CD4-positive, alpha-beta T cell (primary cell): ENCODE measurements at regions of chr10 and their contacts with region 1.

Region 1: DNA sequence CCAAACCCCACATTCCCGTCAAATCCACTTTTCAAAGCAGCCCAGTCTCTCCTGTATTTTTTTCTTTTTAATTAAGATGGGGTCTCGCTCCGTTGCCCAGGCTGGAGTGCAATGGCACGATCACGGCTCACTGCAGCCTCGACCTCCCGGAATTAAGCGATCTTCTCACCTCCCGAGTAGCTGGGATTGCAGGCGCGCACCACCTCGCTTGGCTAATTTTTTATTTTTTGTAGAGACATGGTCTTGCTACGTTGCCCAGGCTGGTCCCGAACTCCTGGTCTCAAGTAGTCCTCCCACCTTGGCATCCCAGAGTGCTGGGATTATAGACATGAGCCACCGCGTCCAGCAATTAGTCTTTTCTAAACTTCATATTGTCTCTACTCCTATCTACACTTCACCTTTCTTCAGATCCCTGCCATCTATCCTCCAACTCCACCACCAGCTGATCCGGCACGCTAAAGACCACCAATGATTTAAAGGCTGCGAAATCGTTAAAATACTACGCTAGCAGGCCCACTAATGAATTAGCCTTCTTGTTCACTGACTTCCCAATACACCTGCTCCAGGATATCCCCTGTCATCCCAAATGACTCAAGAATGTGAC is 525 bp upstream of the CHUK start:
- DNase-seq: peak in 2 of 14 experiments; percentile 5 to 8
- ATAC-seq: no peak
- H3K4me3 ChIP-seq: peak overlapping the region; percentile 95
- H3K4me3 Mint-ChIP-seq: peak overlapping the region; percentile 88
- H3K27ac ChIP-seq: peak overlapping the region; percentile 62 to 72
- H3K27ac Mint-ChIP-seq: peak overlapping the region; percentile 60
- H3K4me1 ChIP-seq: peaks cover 16% of the 10 kb centered on the region
- H3K4me1 Mint-ChIP-seq: peaks cover 35% of the 10 kb centered on the region
- H3K27me3 ChIP-seq: no peaks in the 10 kb centered on the region
- H3K27me3 Mint-ChIP-seq: no peaks in the 10 kb centered on the region
- CTCF ChIP-seq: no peak

Region 2: DNA sequence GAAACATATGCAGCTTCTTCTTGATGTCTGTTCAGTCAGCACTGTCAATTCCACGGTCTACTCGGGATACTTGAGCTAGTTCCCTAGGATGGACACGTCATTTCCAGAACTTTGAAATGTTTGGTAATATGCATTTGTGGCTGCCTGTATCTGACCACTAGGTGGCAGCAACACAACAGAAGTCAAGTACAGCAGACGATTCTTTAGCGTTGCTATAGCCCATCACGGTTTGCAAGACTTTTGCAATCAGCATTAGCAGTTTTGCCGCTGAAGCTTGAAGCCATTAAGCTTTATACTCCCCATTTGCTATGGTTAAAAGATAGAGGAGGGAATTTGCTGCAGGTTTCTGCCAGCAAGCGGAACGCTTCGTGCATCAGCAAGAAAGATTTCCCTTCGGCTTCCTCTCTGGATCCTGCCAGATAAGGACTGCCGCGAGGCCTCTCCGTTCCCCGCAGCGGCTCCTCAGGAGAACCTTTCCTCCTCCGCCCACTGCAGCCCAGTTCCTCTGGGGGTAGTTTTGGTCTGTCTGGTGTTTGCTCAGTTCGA is 384.0 kb before region 1 on chr10:
- CTCF ChIA-PET with region 1: no interaction called
- POLR2A ChIA-PET with region 1: no interaction called
- intact Hi-C with region 1: loop called (anchors 5 to 10 kb)
- DNase-seq: peak; percentile 41 to 88 (median 58)
- ATAC-seq: peak; percentile 81
- H3K4me3 ChIP-seq: peak overlapping the region; percentile 13
- H3K4me3 Mint-ChIP-seq: no peak overlapping the region
- H3K27ac ChIP-seq: no peak overlapping the region
- H3K27ac Mint-ChIP-seq: no peak overlapping the region
- H3K4me1 ChIP-seq: peaks cover 6% of the 10 kb centered on the region
- H3K4me1 Mint-ChIP-seq: peaks cover 5% of the 10 kb centered on the region
- H3K27me3 ChIP-seq: peaks cover 0 to 8% of the 10 kb centered on the region in 2 experiments
- H3K27me3 Mint-ChIP-seq: no peaks in the 10 kb centered on the region
- CTCF ChIP-seq: peak; percentile 92

Region 3: GRCh38 chr10:100185364-100186252 is 44.3 kb before region 1 on chr10 and contains the start of gene ERLIN1:
- CTCF ChIA-PET with region 1: interaction called, 3 read pairs
- POLR2A ChIA-PET with region 1: no interaction called
- intact Hi-C with region 1: loop called (anchors 2 kb)
- DNase-seq: peak; percentile 82 to 96 (median 90)
- ATAC-seq: peak; percentile 92
- H3K4me3 ChIP-seq: peak within 1 kb of the TSS; percentile 80
- H3K4me3 Mint-ChIP-seq: peak within 1 kb of the TSS; percentile 98
- H3K27ac ChIP-seq: peak within 1 kb of the TSS; percentile 72 to 81
- H3K27ac Mint-ChIP-seq: peak within 1 kb of the TSS; percentile 92
- H3K4me1 ChIP-seq: peaks cover 22% of the 10 kb centered on the region
- H3K4me1 Mint-ChIP-seq: peaks cover 73% of the 10 kb centered on the region
- H3K27me3 ChIP-seq: no peaks in the 10 kb centered on the region
- H3K27me3 Mint-ChIP-seq: no peaks in the 10 kb centered on the region
- CTCF ChIP-seq: no peak
- total RNA-seq, gene ERLIN1: 1.5 to 2.9 TPM

Region 4: DNA sequence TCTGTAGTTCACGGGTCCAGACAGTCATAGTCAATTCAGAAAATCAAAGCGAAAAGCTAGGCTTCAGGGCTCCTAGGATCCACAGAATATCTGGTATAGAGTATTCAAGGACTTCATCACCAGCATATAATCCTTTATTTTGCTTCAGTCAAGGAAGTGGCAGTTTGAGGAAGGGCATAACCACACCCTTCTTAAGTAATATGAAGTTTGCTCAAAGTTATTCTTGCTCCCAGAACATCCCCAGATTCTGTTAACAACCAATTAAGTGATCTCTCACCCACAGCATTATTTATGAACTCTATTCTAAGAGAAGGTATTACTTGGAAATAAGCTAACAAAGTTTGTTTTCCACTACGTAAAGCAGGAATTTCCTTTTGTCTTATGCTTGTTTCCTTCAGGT is 24.3 kb after region 1 on chr10:
- CTCF ChIA-PET with region 1: no interaction called
- POLR2A ChIA-PET with region 1: no interaction called
- intact Hi-C with region 1: no loop called
- DNase-seq: no peak
- ATAC-seq: no peak
- H3K4me3 ChIP-seq: no peak overlapping the region
- H3K4me3 Mint-ChIP-seq: no peak overlapping the region
- H3K27ac ChIP-seq: no peak overlapping the region
- H3K27ac Mint-ChIP-seq: no peak overlapping the region
- H3K4me1 ChIP-seq: no peaks in the 10 kb centered on the region
- H3K4me1 Mint-ChIP-seq: peaks cover 10% of the 10 kb centered on the region
- H3K27me3 ChIP-seq: no peaks in the 10 kb centered on the region
- H3K27me3 Mint-ChIP-seq: no peaks in the 10 kb centered on the region
- CTCF ChIP-seq: no peak

Region 5: GRCh38 chr10:100267237-100268104 is 37.5 kb after region 1 on chr10 and contains the start of gene CWF19L1:
- CTCF ChIA-PET with region 1: no interaction called
- POLR2A ChIA-PET with region 1: interaction called, 5 read pairs
- intact Hi-C with region 1: loop called in 1 of 2 experiments (anchors 2 kb)
- DNase-seq: peak; percentile 50 to 86 (median 64)
- ATAC-seq: peak; percentile 89
- H3K4me3 ChIP-seq: peak within 1 kb of the TSS; percentile 98
- H3K4me3 Mint-ChIP-seq: peak within 1 kb of the TSS; percentile 100
- H3K27ac ChIP-seq: peak within 1 kb of the TSS; percentile 69 to 85
- H3K27ac Mint-ChIP-seq: peak within 1 kb of the TSS; percentile 92
- H3K4me1 ChIP-seq: peaks cover 31% of the 10 kb centered on the region
- H3K4me1 Mint-ChIP-seq: peaks cover 26% of the 10 kb centered on the region
- H3K27me3 ChIP-seq: no peaks in the 10 kb centered on the region
- H3K27me3 Mint-ChIP-seq: no peaks in the 10 kb centered on the region
- CTCF ChIP-seq: no peak
- total RNA-seq, gene CWF19L1: 60.1 to 66.7 TPM